ENCODE measurements at regions of chr20 and their contacts with region 1.

Region 1: GRCh38 chr20:17682103-17682888 is at the start of gene RRBP1:
- DNase-seq: peak; percentile 94
- H3K4me3 ChIP-seq: peak within 1 kb of the TSS; percentile 79
- H3K27ac ChIP-seq: peak within 1 kb of the TSS; percentile 89
- H3K27me3 ChIP-seq: peaks cover 5% of the 10 kb centered on the region
- CTCF ChIP-seq: peak; percentile 77
- polyA plus RNA-seq, gene RRBP1: 151 and 153 TPM in 2 replicates

Region 2: DNA sequence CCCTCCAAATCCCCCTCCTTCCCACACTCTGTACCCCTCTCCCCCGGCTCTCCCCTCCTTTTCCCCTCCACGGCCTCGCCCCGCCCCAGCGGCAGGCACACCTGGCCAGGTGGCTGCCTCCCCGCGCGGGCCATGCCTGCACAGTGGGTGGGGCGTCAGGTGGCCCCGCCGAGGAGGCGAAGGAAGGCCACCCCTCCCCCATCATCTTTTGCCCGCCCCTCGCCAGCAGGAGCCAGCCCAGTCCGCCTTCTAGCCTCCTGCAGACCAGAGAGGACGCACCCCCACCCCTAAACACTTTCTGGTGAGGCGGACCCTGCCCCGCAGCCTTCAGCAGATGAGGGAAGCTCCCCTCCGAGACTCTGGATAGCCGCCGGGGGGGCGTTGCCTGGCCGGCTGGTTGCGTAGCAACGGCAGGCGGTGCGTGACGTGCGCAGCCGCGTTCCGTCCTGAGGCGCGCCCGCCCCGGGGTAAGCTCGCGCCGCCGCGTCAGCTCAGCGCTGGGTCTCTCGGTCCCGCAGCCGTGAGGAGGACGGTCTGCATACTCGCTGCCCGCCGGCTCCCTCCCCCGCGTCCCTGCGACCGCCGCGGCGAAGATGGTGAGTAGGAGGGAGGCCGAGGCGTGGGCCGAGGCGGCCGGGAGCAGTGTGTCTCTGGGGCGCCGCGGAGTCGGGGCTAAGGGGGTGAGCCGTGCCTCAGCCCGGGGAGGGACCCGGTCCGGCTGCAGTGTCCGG is 112.5 kb before region 1 on chr20 and contains the start of gene DSTN:
- CTCF ChIA-PET with region 1: no interaction called
- POLR2A ChIA-PET with region 1: interaction called, 11 read pairs
- DNase-seq: peak; percentile 88
- H3K4me3 ChIP-seq: peak within 1 kb of the TSS; percentile 87
- H3K27ac ChIP-seq: peak within 1 kb of the TSS; percentile 95
- H3K27me3 ChIP-seq: no peaks in the 10 kb centered on the region
- CTCF ChIP-seq: no peak
- polyA plus RNA-seq, gene DSTN: 318 and 414 TPM in 2 replicates

Region 3: DNA sequence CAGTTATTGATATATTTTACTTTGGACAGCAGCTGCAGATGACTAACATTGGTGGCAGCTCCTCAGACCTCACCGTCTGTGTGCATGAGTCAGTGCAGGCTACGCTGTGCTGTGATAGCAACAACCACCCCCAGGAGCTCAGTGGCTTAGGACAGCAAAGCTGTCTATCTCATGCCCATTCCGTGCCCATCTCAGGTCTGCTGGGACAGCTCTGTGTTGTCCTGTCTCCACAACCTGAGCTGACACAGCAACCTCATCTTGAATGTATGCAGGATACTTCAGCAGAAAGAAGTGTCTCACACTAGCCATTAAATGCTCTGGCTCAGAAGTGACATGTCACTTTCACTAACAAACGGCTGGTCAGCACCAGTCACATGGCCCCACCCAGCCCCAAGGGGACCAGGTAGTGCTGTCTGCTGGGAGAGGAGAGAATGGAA is 65.2 kb after region 1 on chr20:
- CTCF ChIA-PET with region 1: no interaction called
- POLR2A ChIA-PET with region 1: interaction called, 14 read pairs
- DNase-seq: peak; percentile 78
- H3K4me3 ChIP-seq: no peak overlapping the region
- H3K27ac ChIP-seq: no peak overlapping the region
- H3K27me3 ChIP-seq: no peaks in the 10 kb centered on the region
- CTCF ChIP-seq: no peak

Region 4: GRCh38 chr20:17822039-17822438 is 139.7 kb after region 1 on chr20:
- CTCF ChIA-PET with region 1: no interaction called
- POLR2A ChIA-PET with region 1: interaction called, 12 read pairs
- DNase-seq: peak; percentile 70
- H3K4me3 ChIP-seq: no peak overlapping the region
- H3K27ac ChIP-seq: no peak overlapping the region
- H3K27me3 ChIP-seq: no peaks in the 10 kb centered on the region
- CTCF ChIP-seq: no peak

Region 5: GRCh38 chr20:17843246-17844132 is 161.2 kb after region 1 on chr20:
- CTCF ChIA-PET with region 1: interaction called, 5 read pairs
- POLR2A ChIA-PET with region 1: interaction called, 53 read pairs
- DNase-seq: peak; percentile 90
- H3K4me3 ChIP-seq: peak overlapping the region; percentile 35
- H3K27ac ChIP-seq: peak overlapping the region; percentile 97
- H3K27me3 ChIP-seq: no peaks in the 10 kb centered on the region
- CTCF ChIP-seq: no peak

Region 6: GRCh38 chr20:17898548-17898994 is 216.3 kb after region 1 on chr20:
- CTCF ChIA-PET with region 1: interaction called, 20 read pairs
- POLR2A ChIA-PET with region 1: interaction called, 51 read pairs
- DNase-seq: peak; percentile 44
- H3K4me3 ChIP-seq: no peak overlapping the region
- H3K27ac ChIP-seq: no peak overlapping the region
- H3K27me3 ChIP-seq: no peaks in the 10 kb centered on the region
- CTCF ChIP-seq: peak; percentile 98

Region 7: DNA sequence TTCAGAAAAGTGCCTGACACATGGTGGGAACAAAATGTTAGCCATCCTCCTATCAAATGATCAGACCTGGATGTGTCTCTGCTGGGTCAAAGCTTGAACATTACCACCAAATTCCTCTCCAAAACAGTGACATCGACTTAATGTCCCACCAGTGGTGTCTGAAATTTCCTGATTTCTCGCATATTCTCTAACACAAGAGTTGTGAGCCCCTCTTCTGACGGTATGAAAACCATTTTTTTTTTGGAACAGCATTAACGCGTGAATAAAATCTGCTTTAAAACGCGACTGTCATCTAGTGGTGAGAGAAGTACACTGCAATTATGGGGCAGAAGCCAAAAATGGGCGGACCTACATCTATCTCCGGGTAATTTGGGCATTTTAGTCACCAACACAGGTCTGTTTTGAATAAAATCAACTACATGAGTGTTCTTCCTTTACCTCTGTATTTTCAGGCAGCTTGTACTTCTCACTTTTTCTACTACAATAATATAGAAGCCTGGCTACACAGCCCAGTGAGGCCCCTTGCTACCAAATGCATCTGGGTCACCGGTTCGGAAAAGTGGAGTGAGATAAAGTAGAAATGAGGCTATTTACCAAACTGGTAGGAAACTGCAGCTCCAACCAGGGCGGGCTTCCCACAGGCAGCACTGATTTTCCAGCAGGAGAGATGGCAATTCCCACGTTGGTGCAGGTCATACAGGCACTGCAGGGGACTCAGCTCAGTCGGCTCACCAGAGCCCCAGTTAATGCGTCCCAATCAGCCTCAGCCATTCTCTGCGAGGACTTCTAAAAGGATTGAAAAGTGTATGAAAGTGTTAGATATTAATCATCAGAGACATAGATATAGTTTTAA is 313.9 kb after region 1 on chr20:
- CTCF ChIA-PET with region 1: interaction called, 17 read pairs
- POLR2A ChIA-PET with region 1: no interaction called
- DNase-seq: no peak
- H3K4me3 ChIP-seq: no peak overlapping the region
- H3K27ac ChIP-seq: no peak overlapping the region
- H3K27me3 ChIP-seq: no peaks in the 10 kb centered on the region
- CTCF ChIP-seq: peak; percentile 99

Measured in AG04450 (cell line).